Activated CD8-positive, alpha-beta T cell treated with anti-CD3 and anti-CD28 coated beads, Interleukin-2, amount 10 ng/mL, durations not matched to agents 7 days and 5 days (primary cell): ENCODE measurements at regions of chr5 and their contacts with region 1.

Region 1: DNA sequence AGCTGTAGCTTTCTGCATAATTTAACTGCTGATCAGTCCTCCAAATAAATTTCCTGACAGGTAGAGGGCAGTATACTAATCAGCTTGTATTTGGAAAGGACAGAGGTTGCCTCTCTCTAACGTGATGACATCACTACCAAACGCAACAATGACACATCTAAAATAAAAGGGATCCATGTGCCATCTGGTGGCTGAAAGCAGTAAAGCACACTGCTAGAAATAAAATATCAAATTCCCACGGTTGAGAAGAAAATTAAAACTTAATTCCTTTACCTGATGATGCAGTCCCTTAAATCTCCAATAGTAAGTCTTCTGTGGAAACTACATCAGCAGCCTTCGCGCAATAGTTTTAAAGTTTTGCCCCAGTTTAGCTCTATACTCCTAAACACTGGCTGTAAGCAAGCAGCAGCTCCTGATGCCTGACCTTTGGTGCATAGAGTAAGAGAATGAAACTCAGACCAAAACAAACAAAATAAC is 54.5 kb downstream of the DIAPH1 start:
- DNase-seq: peak; percentile 82
- ATAC-seq: peak; percentile 85
- H3K4me3 Mint-ChIP-seq: no peak overlapping the region
- H3K27ac Mint-ChIP-seq: peak overlapping the region; percentile 80
- H3K4me1 Mint-ChIP-seq: peaks cover 18% of the 10 kb centered on the region
- H3K27me3 Mint-ChIP-seq: no peaks in the 10 kb centered on the region

Region 2: GRCh38 chr5:141354900-141355469 is 209.3 kb before region 1 on chr5 and contains the start of gene PCDHGA4:
- CTCF ChIA-PET with region 1: interaction called, 11 read pairs
- POLR2A ChIA-PET with region 1: no interaction called
- DNase-seq: no peak
- ATAC-seq: no peak
- H3K4me3 Mint-ChIP-seq: no peak within 1 kb of the TSS
- H3K27ac Mint-ChIP-seq: no peak within 1 kb of the TSS
- H3K4me1 Mint-ChIP-seq: peaks cover 2% of the 10 kb centered on the region
- H3K27me3 Mint-ChIP-seq: peaks cover 31% of the 10 kb centered on the region
- total RNA-seq, gene PCDHGA4: 0.10 TPM in 1 of 2 experiments, not detected in the other

Region 3: DNA sequence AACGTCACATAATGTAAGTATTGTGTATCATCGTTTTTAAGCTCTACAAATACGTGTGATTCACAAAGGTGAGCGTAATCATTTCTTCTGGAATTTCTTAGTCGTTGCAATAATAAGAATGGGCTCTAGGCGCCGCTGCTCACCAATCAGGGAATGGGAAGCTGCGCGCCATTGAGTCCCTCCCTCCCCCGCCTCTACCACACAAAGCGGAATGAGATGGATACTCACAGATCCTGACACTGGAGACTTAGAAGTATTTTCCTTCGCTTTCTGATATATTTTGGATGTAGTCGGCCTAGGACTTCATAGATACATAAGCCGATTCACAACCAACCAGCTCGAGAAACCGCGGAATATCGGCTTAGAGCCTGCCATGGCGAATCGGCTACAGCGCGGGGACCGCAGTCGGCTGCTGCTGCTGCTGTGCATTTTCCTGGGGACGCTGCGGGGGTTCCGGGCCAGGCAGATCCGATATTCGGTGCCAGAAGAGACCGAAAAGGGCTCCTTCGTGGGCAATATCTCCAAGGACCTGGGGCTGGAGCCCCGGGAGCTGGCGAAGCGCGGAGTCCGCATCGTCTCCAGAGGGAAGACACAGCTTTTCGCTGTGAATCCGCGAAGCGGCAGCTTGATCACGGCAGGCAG is 143.3 kb before region 1 on chr5 and contains the start of gene PCDHGA11:
- CTCF ChIA-PET with region 1: interaction called, 20 read pairs
- POLR2A ChIA-PET with region 1: no interaction called
- DNase-seq: peak; percentile 53
- ATAC-seq: no peak
- H3K4me3 Mint-ChIP-seq: peak within 1 kb of the TSS; percentile 69
- H3K27ac Mint-ChIP-seq: peak within 1 kb of the TSS; percentile 35
- H3K4me1 Mint-ChIP-seq: peaks cover 11% of the 10 kb centered on the region
- H3K27me3 Mint-ChIP-seq: peaks cover 62% of the 10 kb centered on the region
- total RNA-seq, gene PCDHGA11: 0.05 TPM in 1 of 2 experiments, not detected in the other

Region 4: DNA sequence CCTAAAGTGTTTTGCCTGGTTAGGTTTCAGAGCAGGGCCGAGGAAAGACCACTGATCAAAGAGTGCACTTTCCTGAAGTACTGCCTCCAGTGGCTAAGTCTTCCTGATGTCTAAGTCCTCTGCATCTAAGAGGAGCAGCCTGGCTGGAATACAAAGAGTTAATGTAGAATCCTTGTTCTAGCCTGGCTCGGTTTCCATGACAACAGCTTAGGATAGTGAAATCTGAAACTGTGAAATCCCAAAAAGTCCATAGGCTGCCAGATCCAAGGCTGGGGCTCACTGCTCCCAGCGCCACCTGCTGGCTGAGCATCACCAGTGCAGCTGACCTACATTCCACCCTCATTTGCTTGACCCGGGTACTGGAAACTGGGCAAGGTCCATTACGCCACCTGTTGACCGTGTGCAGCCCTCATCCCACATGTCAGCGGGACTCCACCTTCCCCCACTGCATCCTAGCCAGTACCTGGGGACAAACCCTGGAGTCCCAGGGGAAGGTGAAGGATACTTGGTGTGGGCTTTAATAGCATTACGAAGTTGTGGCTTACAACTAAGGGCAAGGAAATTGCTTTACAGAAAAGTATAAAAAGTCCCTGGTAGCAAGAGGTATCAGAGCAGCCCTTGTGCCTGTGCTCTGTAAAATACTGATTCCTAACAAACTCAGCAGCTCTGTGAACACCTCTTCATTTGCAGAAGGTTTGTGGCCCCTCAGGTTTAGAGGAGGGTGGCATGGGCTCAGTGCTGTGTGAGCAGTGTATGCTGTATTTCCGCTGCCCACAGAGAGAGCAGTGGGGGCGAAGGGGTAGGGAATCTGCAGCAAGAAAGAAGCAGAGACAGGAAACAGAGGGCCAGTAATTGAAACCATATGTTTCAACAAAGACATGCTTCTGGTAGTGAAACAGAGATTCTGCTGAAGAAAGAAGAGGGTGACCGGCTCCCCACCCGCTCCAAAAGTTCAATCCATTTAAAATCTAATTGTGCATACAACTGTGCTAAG is 39.4 kb before region 1 on chr5:
- CTCF ChIA-PET with region 1: interaction called, 36 read pairs
- POLR2A ChIA-PET with region 1: no interaction called
- DNase-seq: peak; percentile 58
- ATAC-seq: peak; percentile 75
- H3K4me3 Mint-ChIP-seq: no peak overlapping the region
- H3K27ac Mint-ChIP-seq: peak overlapping the region; percentile 75
- H3K4me1 Mint-ChIP-seq: peaks cover 32% of the 10 kb centered on the region
- H3K27me3 Mint-ChIP-seq: no peaks in the 10 kb centered on the region

Region 5: DNA sequence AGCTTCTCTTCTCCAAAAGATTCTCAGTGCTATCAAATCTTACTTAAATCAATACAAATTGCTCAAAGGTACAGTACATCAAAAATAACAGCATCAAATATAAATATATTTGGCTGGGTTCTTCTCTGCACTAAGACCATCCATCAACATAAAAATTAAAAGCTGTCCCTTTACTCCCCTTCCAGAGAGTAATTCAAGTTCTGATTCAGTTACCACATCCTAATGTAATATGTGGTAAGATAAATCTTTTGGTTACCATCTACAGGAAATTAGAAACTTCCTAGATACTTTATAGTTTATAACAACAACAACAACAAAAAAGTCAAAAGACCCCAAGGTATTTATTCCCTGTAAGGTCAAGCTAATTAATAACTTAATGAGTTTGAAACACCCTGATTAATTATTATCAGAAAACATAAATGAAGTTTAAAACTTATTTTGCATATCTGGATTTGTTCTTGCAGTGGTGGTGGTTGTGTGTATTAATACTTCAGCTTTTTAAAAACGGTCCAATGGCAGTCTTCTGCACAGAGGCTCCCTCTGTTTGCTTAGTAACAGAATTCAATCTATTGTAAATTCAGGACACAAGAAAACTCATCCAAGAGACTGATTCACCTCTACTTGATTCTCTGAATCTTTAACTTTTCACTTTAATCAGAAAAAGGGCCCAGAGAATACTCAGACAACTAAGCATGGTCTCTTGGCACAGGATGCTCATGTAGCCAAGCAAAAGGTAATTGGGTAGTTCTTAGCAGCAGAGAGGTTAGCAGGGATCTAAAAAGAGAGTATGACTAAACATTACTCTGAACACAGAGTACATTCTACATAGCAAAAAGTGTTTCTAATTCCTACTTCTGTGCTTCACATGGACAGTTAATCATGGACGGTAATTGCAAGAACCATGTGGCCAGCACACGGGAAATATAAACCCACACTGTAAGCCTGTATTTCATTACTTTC is 34.4 kb after region 1 on chr5:
- CTCF ChIA-PET with region 1: interaction called, 37 read pairs
- POLR2A ChIA-PET with region 1: interaction called, 3 read pairs
- DNase-seq: no peak
- ATAC-seq: peak; percentile 57
- H3K4me3 Mint-ChIP-seq: no peak overlapping the region
- H3K27ac Mint-ChIP-seq: peak overlapping the region; percentile 65
- H3K4me1 Mint-ChIP-seq: peaks cover 72% of the 10 kb centered on the region
- H3K27me3 Mint-ChIP-seq: no peaks in the 10 kb centered on the region

Region 6: GRCh38 chr5:141650851-141651727 is 86.8 kb after region 1 on chr5 and contains the start of gene FCHSD1:
- CTCF ChIA-PET with region 1: interaction called, 13 read pairs
- POLR2A ChIA-PET with region 1: no interaction called
- DNase-seq: peak; percentile 91
- ATAC-seq: peak; percentile 95
- H3K4me3 Mint-ChIP-seq: peak within 1 kb of the TSS; percentile 95
- H3K27ac Mint-ChIP-seq: peak within 1 kb of the TSS; percentile 95
- H3K4me1 Mint-ChIP-seq: peaks cover 45% of the 10 kb centered on the region
- H3K27me3 Mint-ChIP-seq: no peaks in the 10 kb centered on the region
- total RNA-seq, gene FCHSD1: 46.9 to 47.8 TPM